Gastrocnemius medialis (tissue), 4 donors: ENCODE measurements at regions of chr1 and their contacts with region 1.

Region 1: DNA sequence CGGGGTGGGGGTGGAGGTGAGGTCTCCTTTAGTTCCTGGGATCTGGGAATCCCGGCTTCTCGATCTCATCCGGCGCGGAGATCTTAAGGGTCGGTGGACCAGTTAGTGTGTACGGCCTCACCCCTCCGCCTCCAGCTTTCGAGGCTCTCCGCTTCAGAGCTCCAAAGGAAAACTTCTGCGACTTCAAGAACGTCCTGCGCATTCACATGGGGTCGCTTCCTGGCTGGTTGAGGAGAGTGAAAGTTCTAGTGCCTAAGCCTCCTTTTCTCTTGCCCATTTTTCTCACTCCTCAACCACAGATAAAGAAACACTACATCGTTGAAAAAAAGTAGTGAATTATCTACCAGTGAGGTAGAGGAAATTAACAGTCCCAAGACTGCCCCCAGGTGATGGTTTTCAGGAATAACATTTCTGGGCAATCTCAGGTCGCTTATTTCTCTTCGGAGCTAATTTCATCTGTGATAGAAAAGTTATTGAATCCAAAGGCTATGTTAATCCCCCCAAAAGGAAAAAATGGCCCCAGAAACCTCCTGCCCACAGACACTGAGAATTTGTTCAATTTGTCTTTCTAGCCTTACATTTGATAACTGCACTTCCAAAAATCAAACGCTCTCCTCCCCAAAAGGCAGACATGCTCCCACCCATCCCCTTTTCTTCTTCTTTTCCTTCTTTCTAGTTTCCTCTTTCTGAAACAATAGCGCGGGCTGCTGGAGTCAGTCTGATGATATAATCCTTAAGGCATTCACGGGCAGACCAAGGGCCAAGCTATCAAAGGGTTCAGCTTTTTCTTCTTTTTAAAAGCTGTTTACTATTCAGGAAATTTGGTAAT is 20.6 kb upstream of the TBX15 start:
- DNase-seq: peak; percentile 35 to 42
- ATAC-seq: peak; percentile 80 to 86
- H3K4me3 ChIP-seq: peak overlapping the region; percentile 19 to 56 (median 30)
- H3K27ac ChIP-seq: no peak overlapping the region
- H3K4me1 ChIP-seq: peaks cover 0 to 4% of the 10 kb centered on the region in 2 donors
- H3K27me3 ChIP-seq: peaks cover 6 to 30% (median 14%) of the 10 kb centered on the region in 3 donors
- CTCF ChIP-seq: peak; percentile 64 to 72 (median 68)
- POLR2A ChIP-seq: no peak

Region 2: GRCh38 chr1:118151312-118151937 is 857.3 kb before region 1 on chr1:
- in situ Hi-C with region 1: loop called (anchors 5 to 25 kb)
- intact Hi-C with region 1: loop called (anchors 1 kb)
- DNase-seq: peak in 1 of 2 donors; percentile 26
- ATAC-seq: peak in 1 of 2 donors; percentile 44
- H3K4me3 ChIP-seq: no peak overlapping the region
- H3K27ac ChIP-seq: no peak overlapping the region
- H3K4me1 ChIP-seq: peaks cover 3 to 4% of the 10 kb centered on the region in 2 donors
- H3K27me3 ChIP-seq: no peaks in the 10 kb centered on the region
- CTCF ChIP-seq: peak; percentile 56 to 75 (median 62)
- POLR2A ChIP-seq: no peak

Region 3: DNA sequence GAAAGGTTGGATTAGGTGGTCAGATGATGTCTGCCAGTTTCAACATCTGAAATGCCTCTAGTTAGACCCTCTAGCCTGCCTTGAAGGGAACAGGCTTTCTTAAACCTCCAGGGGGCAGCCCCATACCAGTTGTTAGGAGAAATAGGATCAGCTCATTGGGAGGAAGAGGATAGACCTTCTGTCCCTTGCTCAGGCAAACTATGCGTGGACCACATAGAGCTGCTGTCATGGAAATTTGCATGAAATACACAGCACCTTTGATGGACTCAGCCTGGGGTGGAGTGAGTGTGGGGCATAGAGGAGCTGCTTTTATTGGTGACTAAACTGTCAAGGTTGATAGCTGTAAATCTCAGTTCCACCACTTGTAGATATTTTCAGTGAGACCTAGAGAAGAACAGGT is 785.3 kb before region 1 on chr1:
- in situ Hi-C with region 1: no loop called
- intact Hi-C with region 1: loop called (anchors 2 kb)
- DNase-seq: peak; percentile 10 to 55
- ATAC-seq: peak; percentile 94 to 99
- H3K4me3 ChIP-seq: no peak overlapping the region
- H3K27ac ChIP-seq: no peak overlapping the region
- H3K4me1 ChIP-seq: peaks cover 0 to 9% of the 10 kb centered on the region in 2 donors
- H3K27me3 ChIP-seq: no peaks in the 10 kb centered on the region
- CTCF ChIP-seq: peak; percentile 50 to 70 (median 63)
- POLR2A ChIP-seq: no peak

Region 4: DNA sequence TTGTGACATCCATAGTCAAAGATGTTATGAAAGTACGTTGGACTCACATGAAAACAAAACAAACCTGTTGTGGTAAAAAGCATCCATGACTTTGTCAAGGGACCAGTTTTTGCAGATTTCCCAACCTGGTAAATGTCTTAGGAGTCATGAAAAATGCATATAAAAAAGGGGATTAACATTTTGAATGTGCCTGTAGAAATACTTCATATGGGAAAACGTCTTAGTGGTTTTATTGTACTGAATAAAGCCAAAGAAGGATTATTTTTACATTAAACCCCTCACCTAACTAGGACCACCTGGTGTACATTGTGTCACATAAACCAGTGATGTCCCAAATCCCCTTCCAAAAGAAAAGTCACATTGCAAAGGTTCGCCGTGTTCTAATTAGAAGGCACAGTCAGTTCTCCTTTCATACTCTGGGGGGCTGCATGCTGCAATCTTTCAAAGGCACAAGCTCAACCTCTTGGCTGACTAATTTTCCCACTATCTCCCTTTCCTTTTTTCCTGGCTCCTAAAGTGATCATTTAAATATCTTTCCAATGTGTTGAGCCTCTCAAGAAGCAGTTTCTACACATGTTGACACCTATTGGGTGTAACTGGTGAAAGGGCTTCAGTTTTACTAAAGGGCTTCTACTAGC is 703.9 kb before region 1 on chr1:
- in situ Hi-C with region 1: no loop called
- intact Hi-C with region 1: loop called (anchors 5 kb)
- DNase-seq: peak in 1 of 2 donors; percentile 52
- ATAC-seq: peak; percentile 24 to 42
- H3K4me3 ChIP-seq: no peak overlapping the region
- H3K27ac ChIP-seq: peak overlapping the region; percentile 84 to 99 (median 89)
- H3K4me1 ChIP-seq: peaks cover 52 to 53% of the 10 kb centered on the region in 2 donors
- H3K27me3 ChIP-seq: no peaks in the 10 kb centered on the region
- CTCF ChIP-seq: peak; percentile 35 to 75 (median 60)
- POLR2A ChIP-seq: no peak

Region 5: GRCh38 chr1:118788463-118788862 is 220.2 kb before region 1 on chr1:
- in situ Hi-C with region 1: loop called in 1 of 4 experiments (anchors 25 kb)
- intact Hi-C with region 1: no loop called
- DNase-seq: peak in 1 of 2 donors; percentile 31
- ATAC-seq: peak in 1 of 2 donors; percentile 53
- H3K4me3 ChIP-seq: no peak overlapping the region
- H3K27ac ChIP-seq: no peak overlapping the region
- H3K4me1 ChIP-seq: no peaks in the 10 kb centered on the region
- H3K27me3 ChIP-seq: no peaks in the 10 kb centered on the region
- CTCF ChIP-seq: no peak
- POLR2A ChIP-seq: no peak

Region 6: GRCh38 chr1:118944133-118944532 is 64.6 kb before region 1 on chr1:
- in situ Hi-C with region 1: no loop called
- intact Hi-C with region 1: loop called (anchors 5 kb)
- DNase-seq: no peak
- ATAC-seq: peak in 1 of 2 donors; percentile 39
- H3K4me3 ChIP-seq: peak overlapping the region; percentile 13 to 47 (median 36)
- H3K27ac ChIP-seq: peak overlapping the region; percentile 83 to 93 (median 88)
- H3K4me1 ChIP-seq: peaks cover 89 to 94% of the 10 kb centered on the region in 2 donors
- H3K27me3 ChIP-seq: no peaks in the 10 kb centered on the region
- CTCF ChIP-seq: no peak
- POLR2A ChIP-seq: no peak

Region 7: GRCh38 chr1:119101563-119101962 is 92.9 kb after region 1 on chr1:
- in situ Hi-C with region 1: no loop called
- intact Hi-C with region 1: no loop called
- DNase-seq: peak; percentile 12 to 37
- ATAC-seq: peak; percentile 92
- H3K4me3 ChIP-seq: no peak overlapping the region
- H3K27ac ChIP-seq: peak overlapping the region; percentile 53 to 75 (median 55)
- H3K4me1 ChIP-seq: peaks cover 3 to 15% of the 10 kb centered on the region in 2 donors
- H3K27me3 ChIP-seq: no peaks in the 10 kb centered on the region
- CTCF ChIP-seq: no peak
- POLR2A ChIP-seq: peak in 1 of 2 donors; percentile 33